Naive thymus-derived CD4-positive, alpha-beta T cell (primary cell): ENCODE measurements at regions of chr13 and their contacts with region 1.

Region 1: DNA sequence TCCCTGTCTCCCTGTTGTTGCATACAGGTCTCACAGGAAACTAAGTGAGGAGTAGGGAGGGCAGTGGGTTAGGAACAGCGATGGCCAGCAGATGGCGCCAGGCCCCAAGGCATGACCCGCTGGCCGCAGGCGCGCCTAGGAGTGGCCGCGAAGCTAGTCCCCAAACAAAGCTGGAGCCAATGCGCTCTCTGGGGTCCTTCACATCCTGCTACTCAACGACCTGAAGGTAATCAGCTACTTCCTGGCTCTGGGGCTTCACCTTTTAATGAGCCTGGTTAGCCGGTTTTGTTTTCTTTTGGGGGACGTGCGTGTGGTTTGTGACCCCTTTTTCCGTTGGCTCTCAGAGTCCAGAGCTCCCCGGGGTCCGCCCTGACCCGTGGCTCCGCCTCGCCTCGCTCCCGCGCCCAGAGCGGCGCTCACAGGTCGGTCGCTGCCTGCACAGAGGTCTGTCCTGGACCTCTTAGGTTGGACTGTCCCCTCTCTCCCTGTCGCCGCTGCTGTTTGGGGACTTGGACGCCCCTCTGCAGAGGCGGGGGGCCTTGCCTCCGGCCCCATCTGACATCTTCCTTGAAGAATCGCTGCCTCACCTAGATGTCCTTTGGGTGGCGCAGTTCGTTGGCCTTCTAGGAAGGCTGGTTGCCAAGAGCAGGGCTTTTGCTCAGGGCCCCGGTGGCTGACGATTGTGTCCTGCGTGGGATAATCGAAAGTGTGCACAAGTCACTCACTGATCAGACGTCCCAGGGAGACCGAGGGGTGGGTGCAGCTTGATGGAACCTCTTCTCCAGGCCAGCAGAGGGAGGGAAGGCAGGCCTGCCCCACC is 62.1 kb upstream of the GTF3A start:
- DNase-seq: peak; percentile 51 to 82 (median 66)
- ATAC-seq: peak; percentile 95
- H3K4me3 ChIP-seq: peak overlapping the region; percentile 47
- H3K4me3 Mint-ChIP-seq: peak overlapping the region; percentile 24 to 83 (median 45)
- H3K27ac ChIP-seq: no peak overlapping the region
- H3K27ac Mint-ChIP-seq: peak overlapping the region in 1 of 9 donors; percentile 35
- H3K4me1 ChIP-seq: peaks cover 0 to 4% of the 10 kb centered on the region in 2 donors
- H3K4me1 Mint-ChIP-seq: peaks cover 0 to 9% (median 5%) of the 10 kb centered on the region in 7 donors
- H3K27me3 ChIP-seq: peaks cover 0 to 7% of the 10 kb centered on the region in 2 donors
- H3K27me3 Mint-ChIP-seq: peaks cover 13 to 50% (median 25%) of the 10 kb centered on the region in 5 donors

Region 2: DNA sequence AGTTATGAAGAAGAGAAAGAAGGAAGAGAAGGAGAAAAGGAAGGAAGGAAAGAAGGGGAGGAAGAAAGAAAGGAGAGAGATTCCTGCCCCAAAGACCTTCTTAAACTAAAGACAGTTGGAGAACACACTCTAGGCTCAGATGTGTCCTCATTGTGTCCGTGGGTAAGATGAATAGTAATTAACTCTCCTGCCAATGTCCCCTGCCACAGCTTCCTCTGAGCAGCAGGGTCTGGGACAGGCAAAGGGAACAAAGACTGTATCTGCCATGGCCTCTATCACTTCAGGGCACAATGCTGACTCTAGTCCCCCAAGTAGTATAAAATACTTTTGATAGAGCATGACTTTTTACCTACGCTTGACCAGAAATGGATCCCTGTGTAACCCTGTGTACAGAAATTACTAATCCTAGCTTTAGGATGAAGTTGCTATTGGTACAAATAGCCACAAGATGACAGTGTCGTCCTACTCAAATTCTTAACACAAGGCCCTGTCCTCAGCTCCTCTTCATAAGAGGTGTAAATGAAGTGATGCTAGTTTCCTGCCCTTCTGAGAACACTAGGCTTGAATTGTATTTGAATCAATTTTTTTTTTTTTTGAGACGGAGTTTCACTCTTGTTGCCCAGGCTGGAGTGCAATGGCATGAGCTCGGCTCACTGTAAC is 415.5 kb before region 1 on chr13:
- CTCF ChIA-PET with region 1: no interaction called
- POLR2A ChIA-PET with region 1: no interaction called
- intact Hi-C with region 1: loop called (anchors 1 kb)
- DNase-seq: no peak
- ATAC-seq: peak; percentile 57
- H3K4me3 ChIP-seq: no peak overlapping the region
- H3K4me3 Mint-ChIP-seq: no peak overlapping the region
- H3K27ac ChIP-seq: no peak overlapping the region
- H3K27ac Mint-ChIP-seq: no peak overlapping the region
- H3K4me1 ChIP-seq: no peaks in the 10 kb centered on the region
- H3K4me1 Mint-ChIP-seq: no peaks in the 10 kb centered on the region
- H3K27me3 ChIP-seq: no peaks in the 10 kb centered on the region
- H3K27me3 Mint-ChIP-seq: peaks cover 0 to 14% (median 0%) of the 10 kb centered on the region in 5 donors

Region 3: GRCh38 chr13:26985285-26985878 is 376.9 kb before region 1 on chr13:
- CTCF ChIA-PET with region 1: interaction called, 122 read pairs
- POLR2A ChIA-PET with region 1: interaction called, 4 read pairs
- intact Hi-C with region 1: loop called (anchors 1 kb)
- DNase-seq: peak; percentile 17 to 76 (median 65)
- ATAC-seq: peak; percentile 83
- H3K4me3 ChIP-seq: no peak overlapping the region
- H3K4me3 Mint-ChIP-seq: no peak overlapping the region
- H3K27ac ChIP-seq: no peak overlapping the region
- H3K27ac Mint-ChIP-seq: peak overlapping the region in 1 of 9 donors; percentile 46
- H3K4me1 ChIP-seq: no peaks in the 10 kb centered on the region
- H3K4me1 Mint-ChIP-seq: peaks cover 0 to 10% (median 0%) of the 10 kb centered on the region in 7 donors
- H3K27me3 ChIP-seq: no peaks in the 10 kb centered on the region
- H3K27me3 Mint-ChIP-seq: peaks cover 3 to 17% (median 11%) of the 10 kb centered on the region in 5 donors

Region 4: DNA sequence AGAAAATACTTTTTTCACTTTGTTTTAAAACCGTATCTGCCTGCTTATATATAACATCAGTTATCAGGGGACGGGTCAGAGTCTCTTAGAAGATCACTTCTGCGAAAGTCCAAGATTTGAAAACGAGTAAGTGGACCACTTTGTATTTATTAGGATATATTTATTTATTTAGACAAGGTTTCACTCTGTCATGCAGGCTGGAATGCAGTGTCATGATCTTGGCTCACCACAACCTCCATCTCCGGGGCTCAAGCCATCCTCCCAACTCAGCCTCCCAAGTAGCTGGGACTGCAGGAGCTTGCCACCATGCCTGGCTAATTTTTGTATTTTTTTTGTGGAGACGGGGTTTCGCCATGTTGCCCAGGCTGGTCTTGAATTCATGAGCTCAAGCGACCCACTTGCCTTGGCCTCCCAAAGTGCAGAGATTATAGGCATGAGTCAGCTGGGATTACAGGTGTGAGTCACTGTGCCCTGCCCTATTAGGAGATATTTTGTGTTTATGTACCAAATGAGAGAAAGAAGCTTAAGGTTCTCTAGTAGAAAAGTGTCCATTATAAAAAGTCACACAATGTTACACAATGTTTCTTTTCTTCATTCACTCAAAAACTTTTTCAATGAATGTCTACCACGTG is 52.2 kb before region 1 on chr13:
- CTCF ChIA-PET with region 1: no interaction called
- POLR2A ChIA-PET with region 1: no interaction called
- intact Hi-C with region 1: no loop called
- DNase-seq: no peak
- ATAC-seq: no peak
- H3K4me3 ChIP-seq: no peak overlapping the region
- H3K4me3 Mint-ChIP-seq: no peak overlapping the region
- H3K27ac ChIP-seq: no peak overlapping the region
- H3K27ac Mint-ChIP-seq: no peak overlapping the region
- H3K4me1 ChIP-seq: peaks cover 0 to 5% of the 10 kb centered on the region in 2 donors
- H3K4me1 Mint-ChIP-seq: peaks cover 5 to 34% (median 22%) of the 10 kb centered on the region in 7 donors
- H3K27me3 ChIP-seq: no peaks in the 10 kb centered on the region
- H3K27me3 Mint-ChIP-seq: peaks cover 0 to 9% (median 0%) of the 10 kb centered on the region in 5 donors

Region 5: DNA sequence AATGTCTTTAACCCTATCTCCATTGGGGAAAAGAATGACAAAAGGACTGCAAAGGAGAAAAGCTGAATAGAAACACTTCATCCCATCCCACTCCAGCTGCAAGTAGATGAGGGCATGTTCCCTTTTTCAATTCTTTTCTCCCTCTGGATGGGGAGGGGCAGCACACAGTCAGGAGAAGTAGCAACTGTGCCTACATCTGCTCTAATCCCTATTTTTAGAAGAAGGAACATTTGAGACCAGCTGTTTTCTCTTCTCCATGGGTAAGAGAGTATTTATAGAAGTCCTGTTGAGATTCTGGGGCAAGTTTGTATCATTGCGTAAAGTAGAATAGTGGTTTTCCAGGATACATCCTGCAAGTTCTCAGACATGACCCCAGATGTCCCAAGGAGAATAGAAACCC is 52.8 kb after region 1 on chr13:
- CTCF ChIA-PET with region 1: no interaction called
- POLR2A ChIA-PET with region 1: no interaction called
- intact Hi-C with region 1: no loop called
- DNase-seq: no peak
- ATAC-seq: no peak
- H3K4me3 ChIP-seq: no peak overlapping the region
- H3K4me3 Mint-ChIP-seq: no peak overlapping the region
- H3K27ac ChIP-seq: no peak overlapping the region
- H3K27ac Mint-ChIP-seq: peak overlapping the region in 2 of 9 donors; percentile 10 to 59
- H3K4me1 ChIP-seq: no peaks in the 10 kb centered on the region
- H3K4me1 Mint-ChIP-seq: peaks cover 0 to 1% (median 0%) of the 10 kb centered on the region in 7 donors
- H3K27me3 ChIP-seq: no peaks in the 10 kb centered on the region
- H3K27me3 Mint-ChIP-seq: peaks cover 0 to 42% (median 0%) of the 10 kb centered on the region in 5 donors

Region 6: DNA sequence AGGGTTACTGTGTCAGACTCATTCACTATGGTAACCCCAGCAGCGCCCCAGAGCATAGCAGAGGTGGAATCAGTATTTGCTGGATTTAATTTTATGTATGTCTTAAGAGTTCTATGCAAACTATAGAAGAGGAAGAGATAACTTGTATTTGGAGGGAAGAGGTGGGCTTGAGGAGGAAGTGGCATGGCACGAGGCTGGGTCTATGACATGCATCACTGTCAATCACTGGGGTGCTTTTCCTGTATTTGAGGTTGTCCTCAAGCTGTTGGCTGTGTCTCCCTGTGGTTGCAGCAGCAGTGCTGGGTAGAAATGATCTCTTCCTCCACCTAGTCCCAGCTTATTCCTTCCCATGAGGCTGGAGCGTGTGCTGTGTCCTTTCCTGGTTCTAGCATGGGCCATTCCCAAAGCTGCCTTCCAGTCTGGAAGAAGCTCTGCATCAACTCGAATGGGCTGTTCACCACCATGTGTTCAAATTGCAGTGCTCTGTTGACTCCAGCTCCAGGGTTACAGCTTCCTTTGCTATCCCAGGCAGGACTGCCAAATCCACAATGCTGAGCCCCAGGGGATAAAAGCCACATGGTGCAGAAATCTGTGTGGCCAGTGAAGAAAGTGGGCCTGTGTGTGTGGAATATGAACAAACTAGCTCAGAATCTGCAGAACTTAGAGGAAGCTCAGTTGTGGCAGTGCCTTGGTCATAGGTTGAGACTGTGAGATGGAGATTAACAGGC is 161.2 kb after region 1 on chr13:
- CTCF ChIA-PET with region 1: no interaction called
- POLR2A ChIA-PET with region 1: no interaction called
- intact Hi-C with region 1: no loop called
- DNase-seq: no peak
- ATAC-seq: no peak
- H3K4me3 ChIP-seq: no peak overlapping the region
- H3K4me3 Mint-ChIP-seq: no peak overlapping the region
- H3K27ac ChIP-seq: no peak overlapping the region
- H3K27ac Mint-ChIP-seq: no peak overlapping the region
- H3K4me1 ChIP-seq: no peaks in the 10 kb centered on the region
- H3K4me1 Mint-ChIP-seq: peaks cover 0 to 5% (median 0%) of the 10 kb centered on the region in 7 donors
- H3K27me3 ChIP-seq: no peaks in the 10 kb centered on the region
- H3K27me3 Mint-ChIP-seq: peaks cover 0 to 16% (median 15%) of the 10 kb centered on the region in 5 donors

Region 7: DNA sequence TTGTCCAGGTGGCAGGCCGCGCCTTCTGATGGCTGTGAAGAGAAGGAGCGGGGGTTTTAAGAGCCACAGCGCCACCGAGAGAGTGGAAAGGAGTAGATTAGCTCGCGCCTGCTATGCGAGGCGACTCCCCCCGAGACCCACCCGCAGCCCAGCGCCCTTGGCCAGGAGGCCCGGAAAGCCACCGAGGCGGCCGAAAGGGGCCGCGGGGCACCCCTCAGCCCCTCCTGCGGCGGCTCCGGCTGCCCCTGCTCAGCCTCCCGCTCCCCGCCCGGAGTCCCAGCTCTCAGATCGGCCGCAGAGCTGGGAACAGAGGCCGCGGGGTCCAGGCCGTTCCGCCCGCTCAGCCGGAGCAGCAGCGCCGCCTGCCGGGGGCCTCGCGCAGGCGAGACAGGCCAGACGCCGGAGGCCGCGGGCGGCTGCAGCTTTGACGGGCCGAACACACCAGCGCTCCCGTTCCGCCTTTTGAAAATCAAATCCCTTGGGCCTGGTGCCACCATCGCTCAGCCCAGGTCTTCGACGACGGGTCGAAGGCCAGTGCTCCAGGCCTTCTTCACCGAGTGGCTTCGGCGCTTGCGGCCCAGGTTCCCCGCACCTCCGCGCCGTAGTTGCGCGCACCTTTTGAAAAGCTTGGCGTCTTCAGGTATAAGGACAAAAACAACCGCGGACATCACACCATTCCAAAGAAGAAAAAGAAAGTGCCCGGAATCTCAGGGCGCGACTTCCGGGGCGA is 591.6 kb after region 1 on chr13:
- CTCF ChIA-PET with region 1: no interaction called
- POLR2A ChIA-PET with region 1: no interaction called
- intact Hi-C with region 1: loop called in 1 of 2 experiments (anchors 1 kb)
- DNase-seq: peak in 8 of 9 donors; percentile 28 to 79 (median 54)
- ATAC-seq: peak; percentile 87
- H3K4me3 ChIP-seq: peak overlapping the region; percentile 35
- H3K4me3 Mint-ChIP-seq: peak overlapping the region; percentile 70 to 83 (median 78)
- H3K27ac ChIP-seq: no peak overlapping the region
- H3K27ac Mint-ChIP-seq: peak overlapping the region in 1 of 9 donors; percentile 38
- H3K4me1 ChIP-seq: no peaks in the 10 kb centered on the region
- H3K4me1 Mint-ChIP-seq: peaks cover 0 to 26% (median 15%) of the 10 kb centered on the region in 7 donors
- H3K27me3 ChIP-seq: peaks cover 0 to 16% of the 10 kb centered on the region in 2 donors
- H3K27me3 Mint-ChIP-seq: peaks cover 75 to 83% (median 77%) of the 10 kb centered on the region in 5 donors

Region 8: DNA sequence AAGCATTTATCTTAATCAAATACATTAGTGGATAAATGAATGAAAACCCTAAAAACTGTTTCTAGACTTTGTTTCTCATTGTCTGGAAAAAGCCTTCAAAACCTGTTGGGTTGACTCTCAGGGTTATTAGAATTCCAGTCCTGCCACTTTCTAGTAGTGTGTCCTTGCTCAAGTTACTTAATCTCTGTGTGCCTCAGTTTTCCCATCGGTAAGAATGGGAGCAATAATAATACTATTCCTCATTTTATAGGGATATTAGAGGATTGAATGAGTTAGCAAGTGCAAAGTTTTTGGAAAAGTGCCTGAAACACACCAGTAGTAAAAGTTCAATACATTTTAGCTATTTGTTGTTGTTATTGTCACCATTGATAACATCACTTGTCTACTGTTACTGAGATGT is 623.3 kb after region 1 on chr13:
- CTCF ChIA-PET with region 1: interaction called, 13 read pairs
- POLR2A ChIA-PET with region 1: no interaction called
- intact Hi-C with region 1: loop called (anchors 1 kb)
- DNase-seq: no peak
- ATAC-seq: no peak
- H3K4me3 ChIP-seq: no peak overlapping the region
- H3K4me3 Mint-ChIP-seq: no peak overlapping the region
- H3K27ac ChIP-seq: no peak overlapping the region
- H3K27ac Mint-ChIP-seq: no peak overlapping the region
- H3K4me1 ChIP-seq: no peaks in the 10 kb centered on the region
- H3K4me1 Mint-ChIP-seq: peaks cover 0 to 10% (median 0%) of the 10 kb centered on the region in 7 donors
- H3K27me3 ChIP-seq: peaks cover 2 to 3% of the 10 kb centered on the region in 2 donors
- H3K27me3 Mint-ChIP-seq: peaks cover 41 to 62% (median 52%) of the 10 kb centered on the region in 5 donors

Region 9: DNA sequence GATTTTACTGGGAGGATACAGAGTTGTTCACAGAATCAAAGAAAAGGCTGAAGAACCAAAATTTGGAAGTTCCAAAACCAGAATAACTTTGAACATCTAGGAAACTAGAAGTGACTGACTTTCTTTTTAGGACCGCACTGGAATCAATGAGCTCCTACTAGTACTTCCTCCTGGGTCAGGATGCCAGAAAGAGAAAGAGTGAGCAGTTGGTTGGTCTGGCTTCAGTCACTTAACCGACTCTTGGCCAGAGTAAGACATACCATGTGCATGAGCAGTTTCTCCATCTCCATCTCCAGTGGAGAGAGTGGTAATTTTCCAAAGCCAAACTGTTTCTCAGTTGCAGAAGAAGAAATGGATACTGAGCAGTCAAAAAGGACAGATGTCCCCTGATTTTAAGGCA is 1430.7 kb after region 1 on chr13:
- CTCF ChIA-PET with region 1: no interaction called
- POLR2A ChIA-PET with region 1: no interaction called
- intact Hi-C with region 1: loop called in 1 of 2 experiments (anchors 2 kb)
- DNase-seq: no peak
- ATAC-seq: no peak
- H3K4me3 ChIP-seq: no peak overlapping the region
- H3K4me3 Mint-ChIP-seq: no peak overlapping the region
- H3K27ac ChIP-seq: no peak overlapping the region
- H3K27ac Mint-ChIP-seq: no peak overlapping the region
- H3K4me1 ChIP-seq: no peaks in the 10 kb centered on the region
- H3K4me1 Mint-ChIP-seq: peaks cover 0 to 6% (median 4%) of the 10 kb centered on the region in 7 donors
- H3K27me3 ChIP-seq: no peaks in the 10 kb centered on the region
- H3K27me3 Mint-ChIP-seq: peaks cover 16 to 42% (median 30%) of the 10 kb centered on the region in 5 donors

Region 10: DNA sequence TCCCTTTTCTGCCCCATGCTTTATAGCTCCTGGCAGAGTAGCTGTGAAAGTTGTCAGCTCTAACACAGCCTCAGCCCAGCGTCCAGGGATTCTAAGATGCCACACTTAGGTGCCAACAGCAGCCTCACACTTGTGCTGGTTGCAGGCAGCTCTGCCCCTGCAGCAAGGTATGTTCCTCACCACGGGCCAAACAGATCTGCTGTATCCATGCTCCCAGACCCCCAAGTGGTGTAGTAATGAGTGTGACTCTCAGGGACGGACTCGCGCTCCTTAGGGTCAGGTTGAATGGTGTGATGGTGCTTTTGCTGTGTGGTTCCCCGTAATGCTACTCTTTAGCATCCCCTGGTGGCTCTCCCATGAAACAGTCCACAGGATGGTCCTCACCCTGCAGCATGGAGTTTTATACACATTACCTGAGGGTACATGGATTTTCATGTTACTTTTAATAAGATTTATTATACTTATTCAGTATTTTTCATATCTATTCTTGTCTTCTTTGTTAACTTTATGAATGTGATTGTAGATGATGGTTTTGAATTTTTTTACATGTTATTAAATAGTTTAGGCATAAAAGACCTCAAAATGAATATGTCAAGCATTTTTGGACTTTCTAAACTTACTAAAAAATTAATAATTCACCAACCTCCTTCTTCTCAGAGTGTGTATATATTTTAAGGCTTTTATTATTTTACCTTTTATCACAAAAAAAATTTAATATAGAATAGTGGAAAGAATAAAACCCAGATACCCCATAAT is 2000.8 kb after region 1 on chr13:
- CTCF ChIA-PET with region 1: no interaction called
- POLR2A ChIA-PET with region 1: no interaction called
- intact Hi-C with region 1: loop called in 1 of 2 experiments (anchors 10 kb)
- DNase-seq: peak in 5 of 9 donors; percentile 7 to 25 (median 16)
- ATAC-seq: peak; percentile 83
- H3K4me3 ChIP-seq: no peak overlapping the region
- H3K4me3 Mint-ChIP-seq: peak overlapping the region in 7 of 10 donors; percentile 5 to 51 (median 20)
- H3K27ac ChIP-seq: no peak overlapping the region
- H3K27ac Mint-ChIP-seq: no peak overlapping the region
- H3K4me1 ChIP-seq: no peaks in the 10 kb centered on the region
- H3K4me1 Mint-ChIP-seq: peaks cover 0 to 4% (median 0%) of the 10 kb centered on the region in 7 donors
- H3K27me3 ChIP-seq: no peaks in the 10 kb centered on the region
- H3K27me3 Mint-ChIP-seq: peaks cover 7 to 25% (median 11%) of the 10 kb centered on the region in 5 donors